ENCODE measurements at regions of chr3 and their contacts with region 1.

Region 1: DNA sequence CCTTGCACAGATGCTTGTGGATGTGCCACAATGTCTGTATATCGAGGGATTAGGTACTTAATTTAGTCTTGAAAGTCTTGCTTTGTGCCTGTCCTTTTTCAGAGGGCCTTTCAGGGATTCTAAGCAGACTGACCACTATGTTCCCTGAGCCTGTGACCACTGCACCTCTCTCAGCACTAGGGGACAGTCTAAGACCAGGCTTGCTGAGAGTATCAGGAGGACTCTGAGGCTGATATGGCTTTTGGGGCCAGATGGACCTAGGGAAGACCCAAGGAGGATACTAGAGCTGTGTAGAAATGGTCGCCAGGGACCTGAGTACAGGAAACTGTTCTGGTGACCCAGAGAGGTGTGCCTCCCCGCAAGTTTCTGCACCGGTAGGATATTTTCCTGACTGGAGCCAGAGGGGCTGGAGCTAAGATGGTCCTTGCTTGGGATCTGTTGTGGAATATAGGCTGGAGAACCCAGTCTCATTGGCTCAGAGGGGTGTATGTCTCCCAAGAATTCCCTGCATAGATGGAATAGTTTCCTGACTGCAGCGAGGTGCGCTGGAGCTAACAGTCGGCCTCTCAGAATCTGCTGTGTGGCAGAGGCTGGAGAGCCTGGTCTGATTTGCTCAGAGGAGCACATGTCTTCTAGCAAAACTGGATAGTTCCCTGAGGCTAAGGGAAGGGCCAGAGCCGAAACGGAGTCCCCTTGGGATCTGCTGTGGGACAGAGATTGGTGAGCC is 213.2 kb upstream of the DCBLD2 start:
- DNase-seq: peak in 1 of 2 experiments; percentile 15
- H3K4me3 ChIP-seq: no peak overlapping the region
- H3K4me3 Mint-ChIP-seq: no peak overlapping the region
- H3K27ac Mint-ChIP-seq: no peak overlapping the region
- H3K4me1 ChIP-seq: no peaks in the 10 kb centered on the region
- H3K4me1 Mint-ChIP-seq: no peaks in the 10 kb centered on the region
- H3K27me3 ChIP-seq: no peaks in the 10 kb centered on the region
- H3K27me3 Mint-ChIP-seq: peaks cover 16% of the 10 kb centered on the region
- CTCF ChIP-seq: peak; percentile 24 to 68

Region 2: GRCh38 chr3:99172736-99173657 is 58.3 kb after region 1 on chr3:
- CTCF ChIA-PET with region 1: interaction called, 3 read pairs
- POLR2A ChIA-PET with region 1: no interaction called
- intact Hi-C with region 1: loop called (anchors 1 kb)
- DNase-seq: peak; percentile 51 to 61
- H3K4me3 ChIP-seq: no peak overlapping the region
- H3K4me3 Mint-ChIP-seq: no peak overlapping the region
- H3K27ac Mint-ChIP-seq: no peak overlapping the region
- H3K4me1 ChIP-seq: no peaks in the 10 kb centered on the region
- H3K4me1 Mint-ChIP-seq: no peaks in the 10 kb centered on the region
- H3K27me3 ChIP-seq: no peaks in the 10 kb centered on the region
- H3K27me3 Mint-ChIP-seq: no peaks in the 10 kb centered on the region
- CTCF ChIP-seq: peak; percentile 68 to 76

Region 3: GRCh38 chr3:99753268-99753975 is 638.7 kb after region 1 on chr3:
- CTCF ChIA-PET with region 1: no interaction called
- POLR2A ChIA-PET with region 1: no interaction called
- intact Hi-C with region 1: loop called (anchors 5 kb)
- DNase-seq: peak in 1 of 2 experiments; percentile 41
- H3K4me3 ChIP-seq: no peak overlapping the region
- H3K4me3 Mint-ChIP-seq: no peak overlapping the region
- H3K27ac Mint-ChIP-seq: no peak overlapping the region
- H3K4me1 ChIP-seq: no peaks in the 10 kb centered on the region
- H3K4me1 Mint-ChIP-seq: no peaks in the 10 kb centered on the region
- H3K27me3 ChIP-seq: no peaks in the 10 kb centered on the region; the same call in 1 of the 2 replicates
- H3K27me3 Mint-ChIP-seq: peaks cover 13% of the 10 kb centered on the region
- CTCF ChIP-seq: peak; percentile 68